ENCODE measurements at regions of chr1 and their contacts with region 1.

Region 1: DNA sequence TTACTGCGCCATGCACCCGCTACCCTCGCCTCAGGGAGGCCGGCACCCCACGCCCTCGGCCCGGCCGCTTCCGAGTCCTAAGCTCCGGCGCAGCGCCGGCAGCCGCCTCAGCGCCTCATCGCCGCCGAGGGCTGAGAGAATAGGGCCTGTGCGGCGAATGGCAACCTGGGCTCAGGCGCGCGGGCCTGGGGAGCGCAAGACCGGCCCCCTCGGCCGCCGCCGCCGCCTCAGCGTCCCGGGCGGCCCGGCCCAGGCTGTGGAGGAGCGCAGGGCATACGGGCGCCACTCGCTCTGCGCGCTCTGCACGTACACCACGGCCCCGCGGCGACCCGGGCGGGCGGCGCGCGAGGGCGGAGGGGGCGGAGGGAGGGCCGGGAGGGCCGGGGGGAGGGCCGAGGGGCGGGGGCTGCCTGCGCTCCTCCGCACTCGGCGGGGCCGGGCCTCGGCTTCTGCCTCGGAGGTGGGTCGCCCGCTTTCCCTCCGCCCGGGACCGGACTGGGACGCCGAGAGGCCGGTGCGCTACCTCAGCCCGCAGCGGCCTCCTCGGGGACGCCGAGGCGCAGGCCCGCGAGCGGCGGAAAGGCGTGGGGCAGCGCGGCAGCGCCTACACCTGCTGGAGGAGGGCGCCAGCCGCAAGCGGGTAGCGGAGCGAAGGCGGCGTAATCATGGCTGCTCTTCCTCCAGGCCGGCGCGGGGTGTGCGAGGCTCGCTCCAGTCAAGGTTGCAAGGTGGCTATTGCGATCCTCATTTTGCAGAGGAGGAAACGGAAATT is at the start of gene EGLN1:
- DNase-seq: peak; percentile 84 to 90 (median 88)
- H3K4me3 ChIP-seq: peak within 1 kb of the TSS; percentile 70 to 95 (median 73)
- H3K27ac ChIP-seq: peak within 1 kb of the TSS; percentile 60 to 100 (median 99)
- H3K4me1 ChIP-seq: peaks cover 31 to 46% of the 10 kb centered on the region in 2 donors
- H3K27me3 ChIP-seq: no peaks in the 10 kb centered on the region
- CTCF ChIP-seq: peak in 1 of 6 experiments; percentile 32
- POLR2A ChIP-seq: peak; percentile 66 to 91
- total RNA-seq, gene EGLN1: 33.4 to 75.6 (median 50.8) TPM

Region 2: GRCh38 chr1:231364192-231364591 is 58.0 kb before region 1 on chr1:
- intact Hi-C with region 1: loop called (anchors 5 to 10 kb)
- DNase-seq: no peak
- H3K4me3 ChIP-seq: no peak overlapping the region
- H3K27ac ChIP-seq: no peak overlapping the region
- H3K4me1 ChIP-seq: no peaks in the 10 kb centered on the region
- H3K27me3 ChIP-seq: no peaks in the 10 kb centered on the region
- CTCF ChIP-seq: no peak
- POLR2A ChIP-seq: no peak

Region 3: DNA sequence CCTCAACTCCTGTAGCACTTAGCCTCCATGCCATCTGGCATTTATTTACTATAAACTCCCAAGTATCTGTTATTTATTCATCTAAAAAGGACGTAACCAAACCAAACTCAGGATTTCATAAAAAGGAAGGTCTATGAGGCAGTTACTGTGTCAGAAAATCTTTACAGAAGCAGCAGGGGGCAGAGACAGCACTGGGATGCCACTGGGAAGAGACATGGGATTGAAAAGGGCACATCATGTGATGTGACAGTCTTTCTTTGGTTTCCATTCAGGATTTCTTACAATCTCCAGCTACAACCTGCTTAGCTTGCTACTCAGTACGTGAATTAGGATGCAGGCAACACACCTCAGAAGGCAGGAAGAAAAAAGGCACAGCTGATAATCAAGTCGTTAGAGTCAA is 52.9 kb before region 1 on chr1:
- intact Hi-C with region 1: loop called (anchors 5 to 10 kb)
- DNase-seq: no peak
- H3K4me3 ChIP-seq: no peak overlapping the region
- H3K27ac ChIP-seq: no peak overlapping the region
- H3K4me1 ChIP-seq: no peaks in the 10 kb centered on the region
- H3K27me3 ChIP-seq: no peaks in the 10 kb centered on the region
- CTCF ChIP-seq: no peak
- POLR2A ChIP-seq: no peak

Region 4: DNA sequence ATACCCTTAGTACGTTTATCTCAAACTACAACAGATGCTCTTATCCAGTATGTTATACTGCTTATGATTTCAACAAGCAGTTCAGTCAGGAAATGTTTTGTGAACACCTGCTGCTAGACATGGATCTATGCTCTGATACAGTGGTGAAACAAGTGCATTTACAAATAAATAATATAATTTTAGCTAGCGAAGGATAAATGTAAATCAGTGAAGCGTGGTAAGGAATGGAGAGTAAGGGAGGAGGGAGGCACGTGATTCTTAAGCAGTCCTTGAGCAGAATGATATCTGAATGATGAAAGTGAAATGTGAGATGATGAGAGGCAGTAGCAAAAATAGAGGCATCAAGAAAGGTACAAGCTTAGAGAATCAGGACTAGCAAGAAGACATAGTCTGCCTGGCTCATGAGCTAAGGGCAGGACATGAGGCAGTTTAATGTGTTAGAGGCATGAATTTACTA is 112.6 kb after region 1 on chr1:
- intact Hi-C with region 1: loop called in 1 of 2 experiments (anchors 10 kb)
- DNase-seq: no peak
- H3K4me3 ChIP-seq: no peak overlapping the region
- H3K27ac ChIP-seq: no peak overlapping the region
- H3K4me1 ChIP-seq: peaks cover 2 to 37% of the 10 kb centered on the region in 2 donors
- H3K27me3 ChIP-seq: no peaks in the 10 kb centered on the region
- CTCF ChIP-seq: no peak
- POLR2A ChIP-seq: no peak

Measured in adrenal gland (tissue), 19 donors.